Activated CD8-positive, alpha-beta T cell treated with anti-CD3 and anti-CD28 coated beads for 36 hours (primary cell): ENCODE measurements at regions of chr2 and their contacts with region 1.

Region 1: DNA sequence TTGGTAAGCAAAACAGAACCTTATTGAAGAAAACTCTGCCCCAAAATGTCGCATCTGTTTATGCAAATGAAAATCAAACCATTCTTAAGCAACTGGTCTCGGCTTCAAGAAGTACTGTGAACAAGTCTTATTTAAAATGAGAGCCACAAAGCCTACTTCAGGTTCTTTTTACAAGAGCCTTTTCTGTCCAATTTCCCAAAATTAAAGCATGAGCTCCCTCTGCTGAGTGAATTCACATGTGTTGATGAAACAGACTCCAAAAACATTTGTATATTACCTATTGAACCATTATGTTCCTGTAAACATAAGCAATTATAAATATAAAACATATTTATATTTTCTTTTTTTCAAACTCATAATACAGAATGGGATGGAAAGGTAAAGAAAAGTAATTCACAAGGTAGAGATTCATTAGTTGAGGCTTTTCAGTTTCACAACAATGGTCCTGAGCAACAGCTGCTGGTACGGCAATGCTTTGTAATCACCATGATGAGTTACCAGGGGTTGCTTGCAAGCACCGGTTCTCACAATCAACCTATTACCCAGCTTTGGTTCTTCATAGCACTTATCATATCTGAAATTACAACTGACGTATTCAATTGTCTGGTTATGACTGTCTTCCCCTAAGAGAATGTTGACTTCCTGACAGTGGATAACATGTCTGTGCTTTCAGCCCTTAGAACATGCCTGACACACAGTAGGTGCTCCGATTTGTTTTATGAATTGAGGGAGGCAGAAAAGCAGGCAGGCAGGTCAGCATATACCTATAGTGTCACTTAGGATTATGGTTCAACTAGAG is 108.4 kb upstream of the BZW1 start:
- DNase-seq: peak; percentile 45
- ATAC-seq: peak; percentile 61
- H3K4me3 Mint-ChIP-seq: no peak overlapping the region
- H3K27ac Mint-ChIP-seq: peak overlapping the region; percentile 77
- H3K4me1 Mint-ChIP-seq: peaks cover 46% of the 10 kb centered on the region
- H3K27me3 Mint-ChIP-seq: peaks cover 12% of the 10 kb centered on the region
- CTCF ChIP-seq: no peak

Region 2: GRCh38 chr2:200578778-200579177 is 124.5 kb before region 1 on chr2:
- CTCF ChIA-PET with region 1: interaction called, 5 read pairs
- POLR2A ChIA-PET with region 1: no interaction called
- intact Hi-C with region 1: loop called (anchors 5 kb)
- DNase-seq: peak; percentile 31
- ATAC-seq: peak; percentile 81
- H3K4me3 Mint-ChIP-seq: no peak overlapping the region
- H3K27ac Mint-ChIP-seq: no peak overlapping the region
- H3K4me1 Mint-ChIP-seq: peaks cover 7% of the 10 kb centered on the region
- H3K27me3 Mint-ChIP-seq: peaks cover 3% of the 10 kb centered on the region
- CTCF ChIP-seq: peak; percentile 44